Testis (tissue), 5 donors: ENCODE measurements at regions of chr2 and their contacts with region 1.

Region 1: GRCh38 chr2:46229134-46230063 is 67.8 kb upstream of the EPAS1 start:
- DNase-seq: no peak
- H3K4me3 ChIP-seq: no peak overlapping the region
- H3K27ac ChIP-seq: no peak overlapping the region
- H3K4me1 ChIP-seq: no peaks in the 10 kb centered on the region
- H3K27me3 ChIP-seq: no peaks in the 10 kb centered on the region
- CTCF ChIP-seq: no peak
- POLR2A ChIP-seq: no peak

Region 2: GRCh38 chr2:46179037-46179652 is 50.3 kb before region 1 on chr2:
- intact Hi-C with region 1: no loop called
- DNase-seq: peak; percentile 39
- H3K4me3 ChIP-seq: no peak overlapping the region
- H3K27ac ChIP-seq: peak overlapping the region in 1 of 2 donors; percentile 36
- H3K4me1 ChIP-seq: no peaks in the 10 kb centered on the region
- H3K27me3 ChIP-seq: no peaks in the 10 kb centered on the region
- CTCF ChIP-seq: no peak
- POLR2A ChIP-seq: no peak

Region 3: GRCh38 chr2:46446871-46447568 is 217.6 kb after region 1 on chr2:
- intact Hi-C with region 1: loop called (anchors 5 kb)
- DNase-seq: no peak
- H3K4me3 ChIP-seq: no peak overlapping the region
- H3K27ac ChIP-seq: no peak overlapping the region
- H3K4me1 ChIP-seq: no peaks in the 10 kb centered on the region
- H3K27me3 ChIP-seq: no peaks in the 10 kb centered on the region
- CTCF ChIP-seq: no peak
- POLR2A ChIP-seq: no peak